Caco-2 (cell line): ENCODE measurements at regions of chr3 and their contacts with region 1.

Region 1: DNA sequence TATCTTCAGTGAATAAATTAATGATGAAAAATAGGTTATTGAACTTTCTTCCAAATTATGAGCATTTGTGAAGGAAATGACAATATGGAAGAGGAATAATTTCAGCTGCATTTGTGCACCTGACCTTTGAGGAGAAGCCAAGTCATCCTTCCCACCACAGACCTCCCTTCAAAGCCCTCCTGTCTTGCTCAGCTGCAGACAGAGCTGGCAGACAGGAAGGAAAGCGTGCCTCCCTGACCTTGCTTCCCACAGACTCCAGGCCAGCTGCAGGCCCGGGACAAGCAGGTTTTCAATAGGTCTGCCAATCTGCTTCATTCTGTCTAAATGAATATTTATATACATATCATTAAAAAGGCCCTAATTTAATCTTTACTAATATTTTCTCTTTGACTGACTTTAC is 152.9 kb upstream of the RBMS3 start:
- DNase-seq: no peak
- H3K4me3 ChIP-seq: no peak overlapping the region
- H3K4me3 Mint-ChIP-seq: no peak overlapping the region
- H3K27ac Mint-ChIP-seq: no peak overlapping the region
- H3K4me1 ChIP-seq: no peaks in the 10 kb centered on the region
- H3K4me1 Mint-ChIP-seq: no peaks in the 10 kb centered on the region
- H3K27me3 ChIP-seq: no peaks in the 10 kb centered on the region
- H3K27me3 Mint-ChIP-seq: no peaks in the 10 kb centered on the region
- CTCF ChIP-seq: no peak

Region 2: GRCh38 chr3:29156086-29156715 is 28.2 kb after region 1 on chr3:
- CTCF ChIA-PET with region 1: no interaction called
- POLR2A ChIA-PET with region 1: no interaction called
- intact Hi-C with region 1: loop called (anchors 1 kb)
- DNase-seq: no peak
- H3K4me3 ChIP-seq: no peak overlapping the region
- H3K4me3 Mint-ChIP-seq: no peak overlapping the region
- H3K27ac Mint-ChIP-seq: no peak overlapping the region
- H3K4me1 ChIP-seq: no peaks in the 10 kb centered on the region
- H3K4me1 Mint-ChIP-seq: peaks cover 3% of the 10 kb centered on the region
- H3K27me3 ChIP-seq: no peaks in the 10 kb centered on the region
- H3K27me3 Mint-ChIP-seq: peaks cover 2% of the 10 kb centered on the region
- CTCF ChIP-seq: no peak

Region 3: GRCh38 chr3:29186131-29186599 is 58.2 kb after region 1 on chr3:
- CTCF ChIA-PET with region 1: no interaction called
- POLR2A ChIA-PET with region 1: no interaction called
- intact Hi-C with region 1: no loop called
- DNase-seq: no peak
- H3K4me3 ChIP-seq: no peak overlapping the region
- H3K4me3 Mint-ChIP-seq: no peak overlapping the region
- H3K27ac Mint-ChIP-seq: no peak overlapping the region
- H3K4me1 ChIP-seq: no peaks in the 10 kb centered on the region; the same call in 1 of the 2 replicates
- H3K4me1 Mint-ChIP-seq: peaks cover 6% of the 10 kb centered on the region
- H3K27me3 ChIP-seq: no peaks in the 10 kb centered on the region
- H3K27me3 Mint-ChIP-seq: no peaks in the 10 kb centered on the region
- CTCF ChIP-seq: no peak